ENCODE measurements at regions of chr4 and their contacts with region 1.

Region 1: DNA sequence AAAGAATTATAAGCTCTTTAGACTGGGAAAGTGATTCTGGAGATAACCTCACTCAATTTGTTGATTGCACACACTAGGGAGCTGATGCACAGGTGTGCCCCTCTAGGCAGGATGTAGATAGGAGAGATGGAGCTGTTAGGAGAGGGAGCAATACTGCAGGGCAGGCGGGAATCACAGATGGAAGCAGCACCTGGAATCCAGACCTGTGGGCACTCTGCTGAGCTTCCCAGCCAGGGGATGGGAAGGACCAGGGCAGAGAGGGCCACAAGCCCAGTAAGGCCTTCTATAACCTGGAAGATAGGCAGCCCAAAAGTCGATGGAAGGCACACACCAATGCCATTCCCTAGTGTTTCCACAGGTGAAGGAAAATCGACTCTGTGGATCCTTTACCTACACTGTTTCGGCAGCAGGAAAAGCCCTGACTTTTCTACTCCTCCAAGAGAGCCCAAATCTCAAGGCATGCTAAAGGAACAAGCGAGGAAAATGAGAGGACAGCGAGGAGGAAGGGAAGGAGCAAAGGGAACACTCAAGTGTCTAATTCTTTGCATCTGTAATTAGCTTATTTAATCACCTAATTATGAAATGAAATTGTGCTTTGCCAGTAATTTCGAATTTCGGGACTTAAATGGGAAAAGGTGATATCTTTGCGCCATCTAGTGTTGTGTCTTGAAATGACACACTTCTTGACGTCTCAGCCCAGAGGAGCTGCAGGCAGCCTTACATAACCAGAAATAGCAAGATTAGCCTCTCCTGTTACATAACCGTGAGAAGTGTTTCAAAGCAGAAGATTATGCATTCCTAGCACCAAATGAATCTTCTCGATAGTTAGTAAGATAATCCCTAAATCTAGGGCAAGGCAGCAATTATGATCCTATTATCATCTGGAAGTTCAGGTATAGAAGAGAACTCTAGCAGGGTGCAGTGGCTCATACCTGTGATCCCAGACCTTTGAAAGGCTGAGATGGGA is 31.0 kb upstream of the TLR3 start:
- DNase-seq: peak; percentile 43 to 54 (median 53)
- H3K4me3 ChIP-seq: no peak overlapping the region
- H3K4me3 Mint-ChIP-seq: peak overlapping the region in 1 of 2 donors; percentile 7
- H3K27ac ChIP-seq: no peak overlapping the region
- H3K27ac Mint-ChIP-seq: no peak overlapping the region
- H3K4me1 ChIP-seq: no peaks in the 10 kb centered on the region
- H3K4me1 Mint-ChIP-seq: no peaks in the 10 kb centered on the region
- H3K27me3 ChIP-seq: peaks cover 0 to 3% of the 10 kb centered on the region in 2 donors
- H3K27me3 Mint-ChIP-seq: peaks cover 2 to 7% (median 3%) of the 10 kb centered on the region in 3 donors
- CTCF ChIP-seq: peak; percentile 89

Region 2: DNA sequence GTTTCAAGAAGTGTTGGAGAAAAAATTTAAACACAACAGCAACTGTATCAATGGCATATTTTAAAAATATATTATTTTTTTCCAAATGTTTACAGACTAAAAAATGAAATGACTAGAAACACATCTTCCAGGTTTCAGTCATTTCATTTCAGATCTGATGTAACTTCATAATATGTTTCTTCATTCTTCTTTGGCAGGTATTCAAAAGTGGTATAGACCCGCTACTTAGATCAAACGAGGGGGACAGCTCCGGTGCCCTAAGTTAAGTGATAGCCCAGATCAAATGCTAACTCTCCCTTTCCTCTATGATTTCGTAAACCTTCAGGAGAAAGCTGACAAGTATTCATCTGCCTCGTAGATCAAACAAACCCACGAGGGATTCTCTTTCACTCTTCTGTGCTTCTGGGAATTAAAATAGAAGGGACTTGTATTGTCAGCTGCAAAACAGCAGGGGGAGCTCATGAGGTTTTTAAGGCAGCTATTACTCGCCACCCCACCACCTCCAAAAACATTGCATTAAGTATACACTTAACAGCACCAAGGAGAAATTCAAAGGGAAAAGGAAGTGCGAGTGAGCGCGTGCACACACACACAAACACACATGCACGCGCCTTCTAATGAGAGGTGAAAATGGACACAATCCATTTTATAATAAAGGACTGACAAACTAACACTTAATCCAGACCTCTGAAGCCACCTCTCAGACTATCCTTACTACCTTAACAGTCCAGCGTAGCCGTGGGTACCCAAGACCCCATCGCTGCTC is 998.3 kb before region 1 on chr4:
- intact Hi-C with region 1: loop called in 1 of 2 experiments (anchors 10 kb)
- DNase-seq: peak; percentile 27 to 52 (median 49)
- H3K4me3 ChIP-seq: no peak overlapping the region
- H3K4me3 Mint-ChIP-seq: peak overlapping the region; percentile 54 to 87
- H3K27ac ChIP-seq: no peak overlapping the region
- H3K27ac Mint-ChIP-seq: no peak overlapping the region
- H3K4me1 ChIP-seq: peaks cover 6% of the 10 kb centered on the region in 2 donors
- H3K4me1 Mint-ChIP-seq: peaks cover 5% of the 10 kb centered on the region
- H3K27me3 ChIP-seq: peaks cover 0 to 4% of the 10 kb centered on the region in 2 donors
- H3K27me3 Mint-ChIP-seq: peaks cover 12 to 15% (median 13%) of the 10 kb centered on the region in 3 donors
- CTCF ChIP-seq: peak; percentile 83

Region 3: GRCh38 chr4:185640811-185641675 is 396.9 kb before region 1 on chr4:
- intact Hi-C with region 1: loop called (anchors 2 to 5 kb)
- DNase-seq: peak; percentile 15 to 40 (median 23)
- H3K4me3 ChIP-seq: no peak overlapping the region
- H3K4me3 Mint-ChIP-seq: no peak overlapping the region
- H3K27ac ChIP-seq: no peak overlapping the region
- H3K27ac Mint-ChIP-seq: no peak overlapping the region
- H3K4me1 ChIP-seq: no peaks in the 10 kb centered on the region
- H3K4me1 Mint-ChIP-seq: no peaks in the 10 kb centered on the region
- H3K27me3 ChIP-seq: peaks cover 23 to 34% of the 10 kb centered on the region in 2 donors
- H3K27me3 Mint-ChIP-seq: peaks cover 41 to 49% (median 42%) of the 10 kb centered on the region in 3 donors
- CTCF ChIP-seq: peak; percentile 62

Region 4: DNA sequence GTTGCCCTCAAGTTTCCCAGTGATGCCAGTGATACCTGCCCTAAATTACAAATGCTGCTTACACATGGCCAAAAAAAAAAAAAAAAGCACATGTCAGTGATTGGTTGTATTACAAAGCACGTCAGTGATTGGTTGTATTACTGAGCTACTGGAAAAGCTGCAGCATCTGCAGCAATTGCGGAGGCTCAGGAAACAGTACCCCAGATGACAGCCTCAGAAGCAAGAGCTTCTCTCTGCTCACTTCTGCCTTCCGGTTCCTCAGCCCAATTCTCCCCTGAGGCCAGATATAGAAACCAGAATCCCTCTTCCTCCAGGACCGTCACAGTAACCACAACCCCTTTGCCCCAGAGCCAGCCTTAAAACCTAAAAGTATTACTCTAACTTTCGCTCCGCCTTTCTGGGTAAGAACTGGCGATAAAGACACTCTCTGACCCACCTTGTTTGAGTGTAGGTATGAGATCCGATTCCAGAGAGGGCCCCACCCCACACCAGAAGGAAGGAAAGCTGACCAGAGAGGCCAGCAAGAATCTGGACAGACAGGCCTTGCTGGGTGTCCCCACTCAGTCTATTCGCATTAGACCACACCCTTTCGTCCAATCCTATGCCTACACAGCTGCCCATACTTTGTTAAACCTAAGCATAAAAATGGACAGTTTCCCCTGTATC is 141.0 kb before region 1 on chr4:
- intact Hi-C with region 1: no loop called
- DNase-seq: no peak
- H3K4me3 ChIP-seq: no peak overlapping the region
- H3K4me3 Mint-ChIP-seq: no peak overlapping the region
- H3K27ac ChIP-seq: no peak overlapping the region
- H3K27ac Mint-ChIP-seq: peak overlapping the region in 1 of 7 donors; percentile 6
- H3K4me1 ChIP-seq: no peaks in the 10 kb centered on the region
- H3K4me1 Mint-ChIP-seq: peaks cover 6% of the 10 kb centered on the region
- H3K27me3 ChIP-seq: no peaks in the 10 kb centered on the region
- H3K27me3 Mint-ChIP-seq: peaks cover 3 to 7% (median 7%) of the 10 kb centered on the region in 3 donors
- CTCF ChIP-seq: no peak

Region 5: GRCh38 chr4:185987961-185988627 is 49.9 kb before region 1 on chr4:
- intact Hi-C with region 1: no loop called
- DNase-seq: no peak
- H3K4me3 ChIP-seq: no peak overlapping the region
- H3K4me3 Mint-ChIP-seq: no peak overlapping the region
- H3K27ac ChIP-seq: no peak overlapping the region
- H3K27ac Mint-ChIP-seq: no peak overlapping the region
- H3K4me1 ChIP-seq: no peaks in the 10 kb centered on the region
- H3K4me1 Mint-ChIP-seq: no peaks in the 10 kb centered on the region
- H3K27me3 ChIP-seq: no peaks in the 10 kb centered on the region
- H3K27me3 Mint-ChIP-seq: peaks cover 0 to 2% (median 0%) of the 10 kb centered on the region in 3 donors
- CTCF ChIP-seq: no peak

Measured in CD14-positive monocyte (primary cell).